Activated CD4-positive, alpha-beta T cell treated with anti-CD3 and anti-CD28 coated beads for 36 hours (primary cell): ENCODE measurements at regions of chr18 and their contacts with region 1.

Region 1: GRCh38 chr18:25453556-25454269 is 101.7 kb upstream of the ZNF521 start:
- DNase-seq: no peak
- ATAC-seq: no peak
- H3K4me3 Mint-ChIP-seq: no peak overlapping the region
- H3K27ac Mint-ChIP-seq: no peak overlapping the region
- H3K4me1 Mint-ChIP-seq: no peaks in the 10 kb centered on the region
- H3K27me3 Mint-ChIP-seq: no peaks in the 10 kb centered on the region

Region 2: DNA sequence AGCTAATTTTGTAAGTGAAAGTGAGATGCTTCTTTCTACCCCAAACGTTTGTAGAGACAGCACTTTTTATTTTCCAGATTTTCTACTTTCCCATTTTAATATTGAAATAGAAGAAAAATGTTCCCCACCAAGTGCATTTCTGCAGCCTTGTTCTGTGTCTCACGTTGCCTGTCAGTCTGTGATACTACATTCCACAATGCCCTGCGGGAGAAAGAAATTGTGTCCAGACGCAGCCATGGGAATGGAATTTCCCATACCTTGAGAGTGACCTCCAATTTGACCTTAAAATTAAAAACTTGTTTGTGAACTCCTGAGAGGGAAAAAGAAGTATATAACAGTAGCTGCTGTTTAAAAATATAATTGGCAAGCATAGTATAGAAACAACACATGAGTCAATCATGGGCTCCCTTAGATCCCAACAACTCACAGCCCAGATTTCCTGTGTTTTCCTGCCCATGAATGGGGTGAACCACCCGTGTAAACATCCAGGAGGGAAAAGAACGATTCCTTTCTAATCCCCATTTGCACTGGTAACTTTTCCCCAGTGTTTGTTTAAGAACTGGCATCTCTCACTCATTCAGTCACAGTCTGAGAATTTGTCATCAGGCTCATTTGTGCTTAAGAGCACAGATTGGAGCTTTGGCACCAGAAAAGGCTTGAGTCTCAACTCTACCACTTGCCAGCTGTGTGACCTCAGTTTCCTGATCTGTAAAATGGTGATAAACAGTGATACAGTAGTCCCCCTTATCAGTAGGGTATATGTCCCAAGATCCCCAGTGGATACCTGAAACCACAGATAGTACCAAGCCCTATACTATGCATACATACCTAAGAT is 64.4 kb after region 1 on chr18:
- CTCF ChIA-PET with region 1: no interaction called
- POLR2A ChIA-PET with region 1: no interaction called
- intact Hi-C with region 1: loop called in 1 of 2 experiments (anchors 10 kb)
- DNase-seq: no peak
- ATAC-seq: no peak
- H3K4me3 Mint-ChIP-seq: no peak overlapping the region
- H3K27ac Mint-ChIP-seq: no peak overlapping the region
- H3K4me1 Mint-ChIP-seq: no peaks in the 10 kb centered on the region
- H3K27me3 Mint-ChIP-seq: no peaks in the 10 kb centered on the region